Caco-2 (cell line): ENCODE measurements at regions of chr20 and their contacts with region 1.

Region 1: GRCh38 chr20:6828794-6829423 is 61.4 kb downstream of the BMP2 start:
- DNase-seq: peak; percentile 74 to 75
- H3K4me3 ChIP-seq: no peak overlapping the region
- H3K4me3 Mint-ChIP-seq: no peak overlapping the region
- H3K27ac Mint-ChIP-seq: no peak overlapping the region
- H3K4me1 ChIP-seq: no peaks in the 10 kb centered on the region
- H3K4me1 Mint-ChIP-seq: peaks cover 6% of the 10 kb centered on the region
- H3K27me3 ChIP-seq: no peaks in the 10 kb centered on the region
- H3K27me3 Mint-ChIP-seq: no peaks in the 10 kb centered on the region
- CTCF ChIP-seq: peak; percentile 81 to 84

Region 2: DNA sequence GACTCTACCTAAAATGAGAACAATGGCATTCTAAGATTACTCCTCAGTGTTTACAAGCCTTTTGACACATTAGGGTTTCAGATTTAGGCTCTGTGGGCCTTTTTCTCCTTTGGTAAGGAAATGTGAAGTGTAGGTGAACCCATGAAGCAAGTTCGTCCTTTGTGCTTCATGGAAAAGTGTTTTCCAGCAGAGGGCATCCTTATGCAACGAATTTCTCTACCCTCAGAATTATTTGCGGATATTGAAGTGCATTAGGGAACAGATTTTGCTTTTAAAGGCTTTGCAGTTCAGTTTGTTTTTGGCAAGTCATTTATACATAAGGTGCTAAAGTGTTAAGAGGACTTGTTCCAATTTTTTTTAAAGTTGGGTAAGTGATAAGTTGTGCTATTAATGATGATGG is 650.4 kb before region 1 on chr20:
- CTCF ChIA-PET with region 1: no interaction called
- POLR2A ChIA-PET with region 1: no interaction called
- intact Hi-C with region 1: loop called (anchors 10 kb)
- DNase-seq: peak in 1 of 2 experiments; percentile 29
- H3K4me3 ChIP-seq: no peak overlapping the region
- H3K4me3 Mint-ChIP-seq: no peak overlapping the region
- H3K27ac Mint-ChIP-seq: no peak overlapping the region
- H3K4me1 ChIP-seq: no peaks in the 10 kb centered on the region
- H3K4me1 Mint-ChIP-seq: no peaks in the 10 kb centered on the region
- H3K27me3 ChIP-seq: no peaks in the 10 kb centered on the region
- H3K27me3 Mint-ChIP-seq: peaks cover 12% of the 10 kb centered on the region
- CTCF ChIP-seq: peak; percentile 32 to 46

Region 3: DNA sequence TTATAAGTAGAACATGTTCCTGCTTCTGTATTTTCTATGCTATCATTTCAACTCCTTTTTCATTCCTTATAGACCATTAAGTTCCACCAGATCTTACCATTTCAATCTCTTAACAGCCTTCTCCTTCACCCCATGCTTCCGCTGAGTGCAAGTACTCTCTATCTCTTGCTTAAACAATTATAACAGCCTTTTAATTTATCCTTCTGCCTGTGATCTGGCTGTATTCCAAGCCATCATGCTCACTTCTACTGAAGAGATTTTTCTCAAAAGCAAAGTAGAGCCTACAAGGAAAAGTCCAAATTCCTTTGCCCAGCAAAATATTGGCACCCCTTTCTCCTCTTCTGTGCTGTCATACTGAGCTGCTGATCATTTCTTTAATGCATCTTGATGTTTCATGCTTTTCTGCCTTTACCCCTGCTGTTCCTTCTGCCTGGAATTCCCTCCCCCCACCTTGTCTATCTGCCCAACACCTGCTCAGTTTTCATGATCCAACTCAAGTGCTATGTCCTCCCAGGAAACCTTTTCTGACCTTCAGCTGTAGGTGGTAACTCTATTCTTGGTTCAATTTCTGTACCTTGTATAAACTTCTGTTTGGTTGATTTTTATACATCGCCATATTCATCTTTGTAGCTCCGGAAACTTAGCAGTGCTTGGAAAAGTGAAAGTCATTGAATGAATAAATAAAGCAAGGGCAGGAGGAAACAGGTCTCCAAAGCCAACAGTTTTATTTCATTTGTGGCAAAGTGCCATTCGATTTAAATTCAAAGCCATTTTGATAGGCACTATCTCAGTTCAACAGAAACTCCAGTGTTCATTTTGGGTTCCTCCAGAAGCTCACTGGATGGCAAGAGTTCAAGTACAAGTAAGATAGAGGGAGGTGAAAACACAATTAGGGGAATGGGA is 72.0 kb before region 1 on chr20:
- CTCF ChIA-PET with region 1: no interaction called
- POLR2A ChIA-PET with region 1: no interaction called
- intact Hi-C with region 1: no loop called
- DNase-seq: no peak
- H3K4me3 ChIP-seq: no peak overlapping the region
- H3K4me3 Mint-ChIP-seq: no peak overlapping the region
- H3K27ac Mint-ChIP-seq: no peak overlapping the region
- H3K4me1 ChIP-seq: no peaks in the 10 kb centered on the region
- H3K4me1 Mint-ChIP-seq: no peaks in the 10 kb centered on the region
- H3K27me3 ChIP-seq: no peaks in the 10 kb centered on the region
- H3K27me3 Mint-ChIP-seq: no peaks in the 10 kb centered on the region
- CTCF ChIP-seq: no peak

Region 4: GRCh38 chr20:6811262-6812035 is 17.5 kb before region 1 on chr20:
- CTCF ChIA-PET with region 1: no interaction called
- POLR2A ChIA-PET with region 1: no interaction called
- intact Hi-C with region 1: no loop called
- DNase-seq: no peak
- H3K4me3 ChIP-seq: no peak overlapping the region
- H3K4me3 Mint-ChIP-seq: no peak overlapping the region
- H3K27ac Mint-ChIP-seq: no peak overlapping the region
- H3K4me1 ChIP-seq: no peaks in the 10 kb centered on the region
- H3K4me1 Mint-ChIP-seq: no peaks in the 10 kb centered on the region
- H3K27me3 ChIP-seq: no peaks in the 10 kb centered on the region
- H3K27me3 Mint-ChIP-seq: no peaks in the 10 kb centered on the region
- CTCF ChIP-seq: no peak

Region 5: DNA sequence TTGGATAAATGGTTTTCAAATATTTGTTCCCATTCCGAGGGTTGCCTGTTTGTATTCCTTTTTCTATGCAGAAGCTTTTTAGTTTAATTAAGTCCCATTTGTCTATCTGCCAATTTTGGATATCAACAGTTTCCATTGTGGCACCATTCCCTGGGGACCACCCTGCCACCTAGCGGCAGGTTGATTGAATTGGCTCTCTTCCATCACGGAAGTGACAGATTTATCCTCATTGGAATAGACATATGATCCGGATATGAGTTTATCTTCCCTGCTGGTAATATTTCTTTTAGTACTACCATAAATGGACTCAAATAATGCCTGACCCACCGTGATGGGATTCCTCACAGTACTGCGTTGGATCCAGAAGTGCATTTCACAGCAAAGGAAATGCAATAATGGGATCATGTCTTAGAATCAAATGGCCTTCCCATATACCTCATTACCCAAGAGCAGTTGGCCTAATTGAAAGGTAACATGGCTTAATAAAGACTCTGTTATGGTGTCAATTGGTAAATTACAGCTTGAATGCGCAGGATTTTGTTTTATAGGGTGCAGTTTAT is 265.6 kb after region 1 on chr20:
- CTCF ChIA-PET with region 1: no interaction called
- POLR2A ChIA-PET with region 1: no interaction called
- intact Hi-C with region 1: loop called (anchors 1 kb)
- DNase-seq: peak; percentile 48 to 75
- H3K4me3 ChIP-seq: no peak overlapping the region
- H3K4me3 Mint-ChIP-seq: no peak overlapping the region
- H3K27ac Mint-ChIP-seq: no peak overlapping the region
- H3K4me1 ChIP-seq: peaks cover 21% of the 10 kb centered on the region
- H3K4me1 Mint-ChIP-seq: peaks cover 6% of the 10 kb centered on the region
- H3K27me3 ChIP-seq: no peaks in the 10 kb centered on the region
- H3K27me3 Mint-ChIP-seq: peaks cover 2% of the 10 kb centered on the region
- CTCF ChIP-seq: peak; percentile 85 to 88

Region 6: DNA sequence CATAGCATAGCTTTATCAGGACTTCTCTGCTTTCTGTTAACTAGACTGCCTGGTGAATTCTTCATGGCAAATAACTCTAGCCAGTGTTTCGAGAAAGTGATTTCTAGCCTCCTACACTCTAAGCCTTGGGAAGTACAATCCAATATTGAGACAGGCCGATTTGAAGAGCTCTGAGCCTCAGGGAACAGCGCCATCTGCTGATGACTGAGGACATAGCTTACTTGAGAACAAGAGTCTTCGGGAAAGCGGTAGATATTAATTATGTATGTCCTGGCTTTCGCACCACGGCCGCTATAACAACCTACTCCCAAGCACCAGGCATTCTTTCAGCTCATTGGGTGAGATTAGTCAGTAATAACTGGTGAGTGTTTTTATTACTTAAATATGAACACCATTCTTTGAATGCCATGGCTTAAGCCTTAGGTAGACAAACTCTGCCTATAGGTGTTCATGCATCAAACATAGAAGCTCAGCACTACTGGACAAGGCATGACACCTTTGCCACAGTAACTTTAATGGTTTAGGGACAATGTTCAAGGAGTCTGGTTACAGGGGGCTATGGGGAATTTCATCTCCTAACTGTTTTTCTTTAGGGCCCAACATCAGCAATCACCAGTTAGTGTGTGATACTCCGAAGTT is 457.1 kb after region 1 on chr20:
- CTCF ChIA-PET with region 1: interaction called, 6 read pairs
- POLR2A ChIA-PET with region 1: no interaction called
- intact Hi-C with region 1: loop called (anchors 1 kb)
- DNase-seq: peak; percentile 75 to 77
- H3K4me3 ChIP-seq: no peak overlapping the region
- H3K4me3 Mint-ChIP-seq: no peak overlapping the region
- H3K27ac Mint-ChIP-seq: no peak overlapping the region
- H3K4me1 ChIP-seq: 0 out of 2 replicates have a peak, but pooled peaks cover under 1% of the 10 kb centered on the region
- H3K4me1 Mint-ChIP-seq: no peaks in the 10 kb centered on the region
- H3K27me3 ChIP-seq: no peaks in the 10 kb centered on the region
- H3K27me3 Mint-ChIP-seq: no peaks in the 10 kb centered on the region
- CTCF ChIP-seq: peak; percentile 78 to 94

Region 7: DNA sequence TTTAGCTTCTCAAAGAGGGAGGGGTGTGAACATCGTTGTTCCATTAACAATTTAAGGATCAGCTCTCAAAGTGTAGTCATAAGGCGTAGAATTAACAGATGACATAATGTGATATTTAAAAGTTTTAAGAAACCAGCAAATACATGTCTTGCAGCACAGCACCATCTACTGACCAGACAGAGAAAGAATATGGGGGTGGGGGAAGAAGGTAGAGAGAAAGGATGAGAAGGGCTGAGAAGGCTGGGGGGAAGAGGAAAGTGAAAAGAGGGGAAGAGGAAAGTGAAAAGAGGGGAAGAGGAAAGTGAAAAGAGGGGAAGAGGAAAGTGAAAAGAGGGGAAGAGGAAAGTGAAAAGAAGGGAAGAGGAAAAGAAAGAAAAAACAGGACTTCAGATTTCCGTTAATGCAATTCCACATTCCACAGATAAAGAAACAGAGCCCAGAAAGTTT is 1030.5 kb after region 1 on chr20:
- CTCF ChIA-PET with region 1: no interaction called
- POLR2A ChIA-PET with region 1: no interaction called
- intact Hi-C with region 1: loop called (anchors 1 kb)
- DNase-seq: peak in 1 of 2 experiments; percentile 31
- H3K4me3 ChIP-seq: no peak overlapping the region
- H3K4me3 Mint-ChIP-seq: no peak overlapping the region
- H3K27ac Mint-ChIP-seq: no peak overlapping the region
- H3K4me1 ChIP-seq: no peaks in the 10 kb centered on the region
- H3K4me1 Mint-ChIP-seq: no peaks in the 10 kb centered on the region
- H3K27me3 ChIP-seq: no peaks in the 10 kb centered on the region
- H3K27me3 Mint-ChIP-seq: peaks cover 10% of the 10 kb centered on the region
- CTCF ChIP-seq: peak; percentile 38 to 75